ENCODE measurements at regions of chr11 and their contacts with region 1.

Region 1: GRCh38 chr11:72724851-72725730 is 27.1 kb downstream of the ARAP1 start:
- DNase-seq: peak; percentile 90
- H3K4me3 ChIP-seq: no peak overlapping the region
- H3K27ac ChIP-seq: no peak overlapping the region
- H3K4me1 ChIP-seq: peaks cover 34% of the 10 kb centered on the region
- CTCF ChIP-seq: peak; percentile 97

Region 2: GRCh38 chr11:72752088-72752914 is 27.2 kb after region 1 on chr11 and contains the start of gene ARAP1:
- CTCF ChIA-PET with region 1: no interaction called
- POLR2A ChIA-PET with region 1: interaction called, 3 read pairs
- intact Hi-C with region 1: loop called (anchors 1 kb)
- DNase-seq: peak; percentile 86
- H3K4me3 ChIP-seq: peak within 1 kb of the TSS; percentile 89
- H3K27ac ChIP-seq: peak within 1 kb of the TSS; percentile 47
- H3K4me1 ChIP-seq: peaks cover 25% of the 10 kb centered on the region
- CTCF ChIP-seq: 0 out of 2 replicates have a peak, but pooled peaks have one; percentile 29
- total RNA-seq, gene ARAP1: 61.3 and 65.6 TPM in 2 replicates

Region 3: GRCh38 chr11:72814286-72815109 is 89.4 kb after region 1 on chr11 and contains the start of gene ATG16L2:
- CTCF ChIA-PET with region 1: interaction called, 6 read pairs
- POLR2A ChIA-PET with region 1: interaction called, 6 read pairs
- intact Hi-C with region 1: loop called (anchors 1 kb)
- DNase-seq: peak; percentile 91
- H3K4me3 ChIP-seq: peak within 1 kb of the TSS; percentile 84
- H3K27ac ChIP-seq: peak within 1 kb of the TSS; percentile 91
- H3K4me1 ChIP-seq: peaks cover 27% of the 10 kb centered on the region
- CTCF ChIP-seq: peak; percentile 60
- total RNA-seq, gene ATG16L2: 99.1 and 103 TPM in 2 replicates